CD4-positive, alpha-beta T cell (primary cell): ENCODE measurements at regions of chr5 and their contacts with region 1.

Region 1: DNA sequence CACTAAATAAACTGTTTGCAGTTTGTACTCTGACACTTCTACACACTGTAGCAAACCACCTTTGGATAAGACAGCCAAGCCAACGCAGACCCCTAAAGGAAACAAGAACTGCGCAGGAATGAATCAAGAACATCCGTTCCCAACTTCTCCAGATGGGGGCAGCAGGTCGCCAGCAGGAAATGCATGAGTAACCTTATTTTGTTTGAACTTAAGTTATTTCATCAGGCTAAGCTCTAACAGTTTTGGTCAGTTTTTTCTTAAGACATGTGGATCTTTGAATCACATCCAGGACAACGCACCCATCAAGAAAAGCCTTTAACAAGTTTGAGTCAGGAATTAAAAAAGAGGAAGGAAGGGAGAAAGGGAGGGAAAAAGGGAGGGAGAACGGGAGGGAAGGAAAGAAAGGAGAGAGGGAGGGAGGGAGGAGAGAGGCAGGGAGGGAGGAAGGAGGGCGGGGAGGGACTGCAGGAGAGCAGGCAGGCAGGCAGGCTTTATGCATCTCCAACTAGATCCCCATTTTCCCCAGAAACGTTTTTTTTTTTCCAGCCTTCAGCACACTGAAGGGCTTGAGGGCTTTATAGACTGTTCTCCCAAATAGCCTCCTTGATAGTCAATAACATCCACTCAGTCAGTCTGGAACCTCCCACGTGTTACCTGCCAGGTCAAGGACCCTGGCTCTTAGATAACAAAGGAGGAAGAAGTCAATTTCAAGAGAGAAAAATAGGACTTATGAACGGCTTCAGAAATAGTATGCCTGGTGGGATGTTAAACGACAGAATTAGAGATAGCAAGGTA is 22.2 kb downstream of the BHMT start:
- DNase-seq: peak; percentile 21 to 77 (median 55)
- ATAC-seq: peak; percentile 83
- H3K4me3 ChIP-seq: peak overlapping the region; percentile 17
- H3K4me3 Mint-ChIP-seq: peak overlapping the region; percentile 70
- H3K27ac ChIP-seq: no peak overlapping the region
- H3K27ac Mint-ChIP-seq: no peak overlapping the region
- H3K4me1 ChIP-seq: peaks cover 11% of the 10 kb centered on the region
- H3K4me1 Mint-ChIP-seq: peaks cover 10% of the 10 kb centered on the region
- H3K27me3 ChIP-seq: no peaks in the 10 kb centered on the region
- H3K27me3 Mint-ChIP-seq: peaks cover 4% of the 10 kb centered on the region
- CTCF ChIP-seq: peak; percentile 62

Region 2: GRCh38 chr5:78320401-78320800 is 813.5 kb before region 1 on chr5:
- CTCF ChIA-PET with region 1: interaction called, 4 read pairs
- POLR2A ChIA-PET with region 1: no interaction called
- intact Hi-C with region 1: loop called in 1 of 2 experiments (anchors 5 kb)
- DNase-seq: peak in 4 of 14 experiments; percentile 7 to 40 (median 34)
- ATAC-seq: no peak
- H3K4me3 ChIP-seq: no peak overlapping the region
- H3K4me3 Mint-ChIP-seq: no peak overlapping the region
- H3K27ac ChIP-seq: no peak overlapping the region
- H3K27ac Mint-ChIP-seq: no peak overlapping the region
- H3K4me1 ChIP-seq: no peaks in the 10 kb centered on the region
- H3K4me1 Mint-ChIP-seq: no peaks in the 10 kb centered on the region
- H3K27me3 ChIP-seq: no peaks in the 10 kb centered on the region
- H3K27me3 Mint-ChIP-seq: peaks cover 3% of the 10 kb centered on the region
- CTCF ChIP-seq: peak; percentile 54

Region 3: GRCh38 chr5:78886341-78887230 is 247.3 kb before region 1 on chr5:
- CTCF ChIA-PET with region 1: no interaction called
- POLR2A ChIA-PET with region 1: no interaction called
- intact Hi-C with region 1: loop called in 1 of 2 experiments (anchors 10 kb)
- DNase-seq: peak in 1 of 14 experiments; percentile 17
- ATAC-seq: no peak
- H3K4me3 ChIP-seq: no peak overlapping the region
- H3K4me3 Mint-ChIP-seq: no peak overlapping the region
- H3K27ac ChIP-seq: no peak overlapping the region
- H3K27ac Mint-ChIP-seq: no peak overlapping the region
- H3K4me1 ChIP-seq: peaks cover 4% of the 10 kb centered on the region
- H3K4me1 Mint-ChIP-seq: peaks cover 14% of the 10 kb centered on the region
- H3K27me3 ChIP-seq: no peaks in the 10 kb centered on the region
- H3K27me3 Mint-ChIP-seq: no peaks in the 10 kb centered on the region
- CTCF ChIP-seq: peak; percentile 59

Region 4: DNA sequence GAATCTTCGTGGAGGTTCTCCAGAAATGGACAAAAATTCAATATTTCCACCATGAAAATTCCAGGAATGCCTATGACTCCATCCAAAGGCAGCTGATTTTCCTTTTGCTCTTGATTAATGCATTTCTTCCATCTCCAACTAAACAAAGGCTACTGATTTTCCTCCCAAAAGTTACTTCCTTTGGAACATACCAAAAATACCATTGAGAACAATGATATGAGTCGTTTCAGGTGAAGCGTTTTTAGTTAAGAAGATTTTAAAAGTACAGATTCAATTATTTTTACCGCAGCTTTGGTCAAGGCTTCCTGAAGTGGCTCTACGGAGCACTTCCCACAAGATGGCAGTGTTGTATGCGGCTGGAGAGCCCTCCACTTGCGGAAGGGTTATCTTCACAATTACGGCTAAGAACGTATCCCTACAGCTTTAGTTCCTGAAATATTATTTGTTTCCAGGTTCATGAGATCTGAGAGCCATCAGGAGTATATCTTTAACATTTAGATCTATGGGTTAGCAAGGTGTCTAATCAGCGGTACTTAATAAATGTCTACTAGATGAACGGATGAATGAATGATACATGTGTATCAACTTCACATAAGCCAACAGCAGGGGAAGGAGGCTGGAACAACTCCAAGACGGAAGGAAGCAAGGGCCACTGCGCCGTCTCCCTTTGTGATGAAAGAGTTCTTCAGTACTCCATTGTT is 112.8 kb before region 1 on chr5:
- CTCF ChIA-PET with region 1: interaction called, 8 read pairs
- POLR2A ChIA-PET with region 1: interaction called, 3 read pairs
- intact Hi-C with region 1: loop called (anchors 2 kb)
- DNase-seq: peak in 13 of 14 experiments; percentile 3 to 59 (median 13)
- ATAC-seq: no peak
- H3K4me3 ChIP-seq: no peak overlapping the region
- H3K4me3 Mint-ChIP-seq: no peak overlapping the region
- H3K27ac ChIP-seq: no peak overlapping the region
- H3K27ac Mint-ChIP-seq: no peak overlapping the region
- H3K4me1 ChIP-seq: peaks cover 4% of the 10 kb centered on the region
- H3K4me1 Mint-ChIP-seq: peaks cover 10% of the 10 kb centered on the region
- H3K27me3 ChIP-seq: peaks cover 18 to 29% of the 10 kb centered on the region in 2 experiments
- H3K27me3 Mint-ChIP-seq: peaks cover 89% of the 10 kb centered on the region
- CTCF ChIP-seq: peak; percentile 67

Region 5: GRCh38 chr5:79464695-79465332 is 331.0 kb after region 1 on chr5:
- CTCF ChIA-PET with region 1: interaction called, 3 read pairs
- POLR2A ChIA-PET with region 1: no interaction called
- intact Hi-C with region 1: loop called (anchors 1 to 2 kb)
- DNase-seq: peak in 3 of 14 experiments; percentile 29 to 41 (median 30)
- ATAC-seq: peak; percentile 43
- H3K4me3 ChIP-seq: no peak overlapping the region
- H3K4me3 Mint-ChIP-seq: no peak overlapping the region
- H3K27ac ChIP-seq: no peak overlapping the region
- H3K27ac Mint-ChIP-seq: no peak overlapping the region
- H3K4me1 ChIP-seq: no peaks in the 10 kb centered on the region
- H3K4me1 Mint-ChIP-seq: peaks cover 4% of the 10 kb centered on the region
- H3K27me3 ChIP-seq: no peaks in the 10 kb centered on the region
- H3K27me3 Mint-ChIP-seq: peaks cover 5% of the 10 kb centered on the region
- CTCF ChIP-seq: peak; percentile 57